OCI-LY7 (cell line): ENCODE measurements at regions of chr11 and their contacts with region 1.

Region 1: DNA sequence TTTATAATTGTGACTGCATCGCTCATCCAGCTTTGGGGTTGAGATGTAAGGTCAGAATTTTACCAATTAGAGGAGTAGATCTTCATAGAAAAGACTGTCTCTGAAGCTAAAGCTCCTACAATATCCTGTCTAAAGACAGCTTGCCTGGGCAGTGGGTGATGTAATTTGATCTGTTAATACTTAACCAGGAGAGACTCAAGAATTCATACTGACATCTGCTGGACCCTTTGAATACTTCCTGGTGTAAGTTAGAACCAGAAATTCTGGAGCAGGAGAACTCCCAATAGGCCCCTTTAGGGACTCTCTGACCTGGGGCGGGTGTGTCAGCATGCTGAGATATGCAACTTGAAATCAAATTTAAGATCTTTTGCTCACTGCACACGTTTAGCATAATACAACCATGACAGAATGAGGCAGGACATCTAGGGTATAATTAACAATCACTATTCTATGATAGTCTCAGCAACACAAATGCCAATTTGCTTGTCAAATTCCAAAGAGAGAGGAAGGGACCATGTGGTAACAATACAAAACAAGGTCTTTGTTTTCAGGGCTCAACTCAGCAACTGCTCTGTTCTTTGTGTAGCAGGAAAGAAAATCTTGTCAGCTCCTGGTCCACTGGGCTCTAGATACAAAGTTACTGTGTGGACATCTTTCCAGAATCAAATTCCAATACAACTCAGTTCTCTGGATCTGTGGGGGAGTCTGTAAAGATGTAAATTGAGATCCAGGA is 143.9 kb downstream of the INSC start:
- DNase-seq: peak; percentile 8
- H3K4me3 ChIP-seq: no peak overlapping the region
- H3K27ac ChIP-seq: no peak overlapping the region
- H3K4me1 ChIP-seq: no peaks in the 10 kb centered on the region
- CTCF ChIP-seq: no peak

Region 2: GRCh38 chr11:14358729-14359439 is 899.7 kb before region 1 on chr11 and contains the start of gene RRAS2:
- CTCF ChIA-PET with region 1: no interaction called
- POLR2A ChIA-PET with region 1: no interaction called
- intact Hi-C with region 1: no loop called
- DNase-seq: no peak
- H3K4me3 ChIP-seq: no peak within 1 kb of the TSS
- H3K27ac ChIP-seq: no peak within 1 kb of the TSS
- H3K4me1 ChIP-seq: no peaks in the 10 kb centered on the region
- CTCF ChIP-seq: no peak
- total RNA-seq, gene RRAS2: 0.60 TPM in 1 of 2 replicates, not detected in the other

Region 3: DNA sequence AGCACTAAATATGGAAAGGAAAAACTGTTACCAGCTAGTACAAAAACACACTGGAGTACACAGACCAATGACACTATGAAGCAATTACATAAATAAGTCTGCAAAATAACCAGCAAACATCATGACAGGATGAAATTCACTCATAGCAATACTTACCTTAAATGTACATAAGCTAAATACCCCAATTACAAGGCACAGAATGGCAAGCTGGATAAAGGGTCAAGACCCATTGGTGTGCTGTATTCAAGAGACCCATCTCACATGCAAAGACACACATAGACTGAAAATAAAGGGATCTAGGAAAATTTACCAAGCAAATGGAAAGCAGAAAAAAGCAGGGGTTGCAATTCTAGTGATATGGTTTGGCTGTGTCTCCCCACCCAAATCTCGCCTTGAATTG is 242.4 kb before region 1 on chr11:
- CTCF ChIA-PET with region 1: no interaction called
- POLR2A ChIA-PET with region 1: no interaction called
- intact Hi-C with region 1: no loop called
- DNase-seq: no peak
- H3K4me3 ChIP-seq: no peak overlapping the region
- H3K27ac ChIP-seq: no peak overlapping the region
- H3K4me1 ChIP-seq: no peaks in the 10 kb centered on the region
- CTCF ChIP-seq: no peak

Region 4: GRCh38 chr11:15580056-15580774 is 321.6 kb after region 1 on chr11:
- CTCF ChIA-PET with region 1: no interaction called
- POLR2A ChIA-PET with region 1: interaction called, 10 read pairs
- intact Hi-C with region 1: no loop called
- DNase-seq: no peak
- H3K4me3 ChIP-seq: no peak overlapping the region
- H3K27ac ChIP-seq: no peak overlapping the region
- H3K4me1 ChIP-seq: no peaks in the 10 kb centered on the region
- CTCF ChIP-seq: no peak